Mammary epithelial cell (primary cell): ENCODE measurements at regions of chr9 and their contacts with region 1.

Region 1: DNA sequence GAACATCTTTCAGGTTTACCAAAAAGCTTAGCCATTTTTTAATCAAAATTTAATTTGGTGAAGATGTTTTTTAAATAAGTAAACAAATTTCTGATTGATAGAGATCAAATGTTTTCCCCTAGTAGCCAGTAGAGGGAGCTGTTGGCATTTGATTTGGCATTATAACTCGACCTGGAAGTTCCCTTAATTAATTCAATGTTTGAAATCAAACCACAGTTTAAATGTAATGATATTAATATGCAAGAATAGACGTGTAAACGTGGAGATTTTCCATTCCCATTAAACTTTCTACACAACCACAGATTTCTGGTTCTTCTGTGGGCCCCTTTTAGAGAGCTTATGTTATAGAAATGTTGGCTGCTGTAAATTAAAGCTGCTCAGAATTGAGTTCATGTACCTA is 148.1 kb upstream of the MPDZ start:
- DNase-seq: peak; percentile 29
- H3K4me3 ChIP-seq: no peak overlapping the region
- H3K27ac ChIP-seq: no peak overlapping the region
- H3K4me1 ChIP-seq: no peaks in the 10 kb centered on the region
- H3K27me3 ChIP-seq: peaks cover 3% of the 10 kb centered on the region
- CTCF ChIP-seq: peak; percentile 62 to 66

Region 2: DNA sequence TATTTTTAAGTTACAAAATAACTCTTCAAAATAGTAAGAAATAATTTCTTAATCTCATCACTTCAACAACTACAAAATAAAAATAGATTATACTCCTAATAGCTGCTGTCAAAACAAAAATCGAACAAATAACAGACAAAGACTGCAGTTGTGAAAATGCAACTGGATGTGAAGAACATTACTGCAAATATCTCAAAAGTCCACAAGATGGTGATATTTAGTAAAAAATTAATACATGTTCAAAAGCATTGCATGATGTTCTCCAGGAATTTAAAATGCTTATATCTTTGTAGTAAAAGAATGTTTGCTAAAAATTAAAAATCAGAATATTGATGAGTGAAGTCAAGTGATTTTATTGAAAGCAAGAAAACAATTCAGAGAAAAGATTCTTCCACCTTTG is 214.2 kb before region 1 on chr9:
- CTCF ChIA-PET with region 1: no interaction called
- dilution Hi-C with region 1: no loop called
- in situ Hi-C with region 1: no loop called
- intact Hi-C with region 1: loop called (anchors 2 kb)
- DNase-seq: no peak
- H3K4me3 ChIP-seq: no peak overlapping the region
- H3K27ac ChIP-seq: no peak overlapping the region
- H3K4me1 ChIP-seq: no peaks in the 10 kb centered on the region
- H3K27me3 ChIP-seq: no peaks in the 10 kb centered on the region
- CTCF ChIP-seq: peak; percentile 28 to 39

Region 3: DNA sequence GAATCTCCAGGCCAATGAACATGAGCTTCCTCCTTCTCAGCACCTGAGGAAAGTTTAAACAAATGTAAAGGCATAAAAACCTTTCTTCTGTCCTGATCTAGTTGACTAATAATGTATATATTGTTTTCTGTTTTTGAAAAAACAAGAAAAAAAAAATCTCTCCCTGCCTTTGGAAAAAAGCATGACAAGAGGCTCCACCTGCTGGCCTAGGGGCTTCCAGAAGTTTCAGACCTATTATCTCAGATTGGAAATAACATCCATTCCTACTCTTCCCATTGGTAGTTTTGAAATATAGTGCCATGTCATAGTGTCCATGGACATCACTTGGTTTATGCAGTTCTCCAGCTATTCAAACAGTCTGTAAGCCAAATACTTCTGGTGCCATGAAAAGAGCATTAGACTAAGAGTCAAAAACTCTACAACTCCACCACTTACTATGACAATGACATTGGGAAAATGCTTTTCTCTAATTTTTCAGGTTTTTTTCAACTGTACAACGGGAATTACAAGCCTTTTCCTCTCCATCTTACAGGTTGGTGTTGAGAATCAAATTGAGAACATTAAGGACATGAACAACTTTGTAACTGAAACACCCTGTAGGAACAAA is 261.5 kb after region 1 on chr9:
- CTCF ChIA-PET with region 1: no interaction called
- dilution Hi-C with region 1: no loop called
- in situ Hi-C with region 1: loop called in 1 of 2 experiments (anchors 25 kb)
- intact Hi-C with region 1: loop called (anchors 1 kb)
- DNase-seq: peak; percentile 8
- H3K4me3 ChIP-seq: no peak overlapping the region
- H3K27ac ChIP-seq: no peak overlapping the region
- H3K4me1 ChIP-seq: peaks cover 16% of the 10 kb centered on the region
- H3K27me3 ChIP-seq: no peaks in the 10 kb centered on the region
- CTCF ChIP-seq: peak; percentile 48 to 62

Region 4: GRCh38 chr9:14353222-14354056 is 925.9 kb after region 1 on chr9:
- CTCF ChIA-PET with region 1: interaction called, 4 read pairs
- dilution Hi-C with region 1: no loop called
- in situ Hi-C with region 1: loop called (anchors 10 kb)
- intact Hi-C with region 1: loop called (anchors 1 kb)
- DNase-seq: peak; percentile 61
- H3K4me3 ChIP-seq: peak overlapping the region in 2 of 3 experiments; percentile 17 to 31
- H3K27ac ChIP-seq: no peak overlapping the region
- H3K4me1 ChIP-seq: peaks cover 41% of the 10 kb centered on the region
- H3K27me3 ChIP-seq: no peaks in the 10 kb centered on the region
- CTCF ChIP-seq: peak; percentile 78 to 95

Region 5: DNA sequence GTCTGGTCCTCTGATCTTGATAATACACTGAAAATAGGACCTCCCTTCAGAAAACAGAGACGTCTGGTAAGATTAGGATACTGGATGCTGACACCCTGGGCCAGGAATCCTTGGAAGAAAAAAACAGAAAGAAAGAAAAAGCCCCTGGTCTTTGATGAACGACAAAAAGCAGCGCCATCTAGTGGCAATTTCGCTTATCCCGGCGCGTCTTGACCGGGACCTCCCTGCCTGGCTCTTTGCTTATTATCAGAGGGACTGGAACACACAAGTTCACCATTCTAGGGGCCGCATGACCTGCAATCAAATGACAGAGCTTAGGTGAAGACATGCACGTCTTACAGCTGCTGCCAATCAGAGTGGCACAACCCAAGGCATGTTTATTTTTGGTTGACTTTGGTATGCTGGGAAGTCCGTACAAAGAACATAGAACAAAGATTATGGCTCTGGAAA is 1001.2 kb after region 1 on chr9:
- CTCF ChIA-PET with region 1: no interaction called
- dilution Hi-C with region 1: loop called (anchors 25 kb)
- in situ Hi-C with region 1: loop called (anchors 10 kb)
- intact Hi-C with region 1: loop called (anchors 1 kb)
- DNase-seq: peak; percentile 21
- H3K4me3 ChIP-seq: no peak overlapping the region
- H3K27ac ChIP-seq: no peak overlapping the region
- H3K4me1 ChIP-seq: peaks cover 7% of the 10 kb centered on the region
- H3K27me3 ChIP-seq: peaks cover 9% of the 10 kb centered on the region
- CTCF ChIP-seq: peak; percentile 70 to 80

Region 6: DNA sequence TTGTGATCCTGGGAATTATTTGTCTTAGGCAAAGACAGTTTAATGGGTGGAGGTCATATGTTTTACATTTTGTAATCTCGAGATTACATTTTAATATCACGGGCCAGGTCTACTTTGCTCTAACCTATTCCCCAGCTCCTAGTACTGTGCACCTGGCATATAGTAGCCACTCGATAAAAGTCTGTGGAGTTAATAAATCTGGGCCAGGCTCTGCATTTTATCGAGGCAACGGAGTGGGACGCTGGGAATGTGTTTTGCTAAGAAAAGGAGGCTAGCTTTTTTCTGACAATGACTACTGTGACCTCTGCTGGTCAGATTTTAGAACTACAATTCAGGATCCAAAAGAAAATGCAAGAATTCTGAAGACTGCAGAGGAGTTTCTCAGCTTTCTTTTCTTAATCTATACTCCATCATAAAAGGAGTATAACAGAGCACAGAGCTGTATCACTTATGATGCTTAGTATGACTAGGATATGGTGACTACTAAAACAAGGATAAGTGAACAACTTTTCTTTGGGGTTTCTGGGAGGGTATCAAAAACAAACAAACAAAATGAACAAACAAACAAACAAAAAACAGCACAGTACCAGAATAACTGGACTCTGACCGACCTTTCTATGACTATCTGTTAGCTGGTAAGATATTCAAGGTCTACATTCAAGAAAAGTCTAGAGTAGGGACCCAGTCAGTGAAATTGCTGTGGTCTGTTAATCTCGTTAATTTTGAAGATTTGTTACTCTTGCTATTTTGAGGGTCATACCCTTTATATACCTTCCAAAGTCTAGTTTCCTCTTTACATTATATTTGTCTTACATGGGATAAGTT is 1341.0 kb after region 1 on chr9:
- CTCF ChIA-PET with region 1: no interaction called
- dilution Hi-C with region 1: no loop called
- in situ Hi-C with region 1: no loop called
- intact Hi-C with region 1: loop called (anchors 10 kb)
- DNase-seq: peak; percentile 36
- H3K4me3 ChIP-seq: no peak overlapping the region
- H3K27ac ChIP-seq: no peak overlapping the region
- H3K4me1 ChIP-seq: no peaks in the 10 kb centered on the region
- H3K27me3 ChIP-seq: no peaks in the 10 kb centered on the region
- CTCF ChIP-seq: peak; percentile 56 to 72